Left colon (tissue), 2 donors: ENCODE measurements at regions of chr20 and their contacts with region 1.

Region 1: GRCh38 chr20:37192137-37192854 is 12.9 kb upstream of the MROH8 start:
- DNase-seq: peak; percentile 81 to 89
- ATAC-seq: peak; percentile 94

Region 2: GRCh38 chr20:37519508-37520128 is 327.3 kb after region 1 on chr20:
- intact Hi-C with region 1: loop called in 1 of 2 experiments (anchors 10 kb)
- DNase-seq: no peak
- ATAC-seq: no peak